Kidney (tissue), 22 donors: ENCODE measurements at regions of chr15 and their contacts with region 1.

Region 1: GRCh38 chr15:26295336-26296085 is 432.4 kb upstream of the ATP10A start:
- DNase-seq: peak in 3 of 5 donors; percentile 33 to 66 (median 56)
- H3K4me3 ChIP-seq: no peak overlapping the region
- H3K27ac ChIP-seq: no peak overlapping the region
- H3K4me1 ChIP-seq: no peaks in the 10 kb centered on the region
- H3K27me3 ChIP-seq: no peaks in the 10 kb centered on the region
- CTCF ChIP-seq: no peak

Region 2: DNA sequence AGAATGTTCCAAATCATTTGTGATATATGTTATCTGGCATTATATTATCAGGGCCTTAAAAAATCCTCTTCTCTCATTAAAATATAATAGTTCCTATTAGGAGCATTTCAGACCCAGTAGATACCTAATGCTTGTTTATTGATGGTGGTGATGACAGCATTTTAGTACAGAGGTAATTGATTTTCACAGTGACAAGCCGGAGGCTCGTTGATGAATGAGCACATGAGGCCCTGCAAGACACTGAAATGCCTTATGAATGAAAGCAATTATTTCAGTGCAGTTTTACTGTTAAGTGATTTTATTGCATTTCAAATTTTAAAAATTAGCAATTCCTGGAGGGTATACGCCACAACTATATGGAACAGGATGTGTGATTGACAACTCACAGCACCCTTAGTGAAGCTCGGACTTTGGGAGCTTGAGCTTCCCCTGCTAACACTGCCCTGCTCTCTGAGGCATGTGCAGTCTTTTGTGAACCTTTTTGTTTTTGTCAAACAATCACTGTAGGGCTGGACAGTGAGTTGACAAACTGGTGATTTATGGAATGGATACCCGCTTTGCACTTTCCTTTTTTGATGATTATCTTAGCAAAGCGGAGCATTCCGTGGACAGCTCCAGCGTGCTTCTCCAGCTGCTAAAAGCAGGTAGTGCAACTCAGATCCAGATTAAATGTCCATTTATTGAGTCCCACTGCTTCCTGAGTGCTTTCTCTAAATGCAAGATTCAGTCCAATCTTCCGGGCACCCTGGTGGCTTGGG is 245.4 kb before region 1 on chr15:
- intact Hi-C with region 1: loop called (anchors 5 kb)
- DNase-seq: no peak
- H3K4me3 ChIP-seq: no peak overlapping the region
- H3K27ac ChIP-seq: no peak overlapping the region
- H3K4me1 ChIP-seq: no peaks in the 10 kb centered on the region
- H3K27me3 ChIP-seq: no peaks in the 10 kb centered on the region
- CTCF ChIP-seq: no peak